PC-9 (cell line): ENCODE measurements at regions of chr6 and their contacts with region 1.

Region 1: GRCh38 chr6:22399701-22400100 is 102.9 kb upstream of the PRL start:
- DNase-seq: no peak
- H3K4me3 ChIP-seq: no peak overlapping the region
- H3K27ac ChIP-seq: no peak overlapping the region
- H3K4me1 ChIP-seq: no peaks in the 10 kb centered on the region
- H3K27me3 ChIP-seq: no peaks in the 10 kb centered on the region
- CTCF ChIP-seq: no peak

Region 2: DNA sequence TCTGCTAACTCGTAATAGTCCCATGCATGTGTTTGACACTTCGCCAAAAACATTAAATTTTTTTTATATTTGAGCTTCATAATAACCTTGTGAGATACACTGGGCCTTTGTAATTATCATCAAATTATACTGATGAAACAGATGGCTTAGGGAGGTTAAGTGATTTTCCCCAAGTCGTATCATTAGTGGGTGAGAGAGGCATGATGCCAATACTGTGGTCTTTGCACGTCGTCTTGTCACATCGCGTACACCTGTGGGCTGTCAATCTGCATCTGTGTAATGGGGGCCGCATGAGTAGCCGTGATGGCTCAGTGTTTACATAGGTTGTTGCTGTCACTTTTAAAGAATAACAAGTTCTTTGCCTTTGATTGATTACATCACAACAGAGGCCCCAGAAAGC is 104.6 kb before region 1 on chr6:
- CTCF ChIA-PET with region 1: no interaction called
- POLR2A ChIA-PET with region 1: no interaction called
- intact Hi-C with region 1: no loop called
- DNase-seq: no peak
- H3K4me3 ChIP-seq: no peak overlapping the region
- H3K27ac ChIP-seq: no peak overlapping the region
- H3K4me1 ChIP-seq: no peaks in the 10 kb centered on the region
- H3K27me3 ChIP-seq: no peaks in the 10 kb centered on the region
- CTCF ChIP-seq: no peak

Region 3: GRCh38 chr6:22413681-22414311 is 14.1 kb after region 1 on chr6:
- CTCF ChIA-PET with region 1: no interaction called
- POLR2A ChIA-PET with region 1: no interaction called
- intact Hi-C with region 1: no loop called
- DNase-seq: no peak
- H3K4me3 ChIP-seq: no peak overlapping the region
- H3K27ac ChIP-seq: no peak overlapping the region
- H3K4me1 ChIP-seq: no peaks in the 10 kb centered on the region
- H3K27me3 ChIP-seq: no peaks in the 10 kb centered on the region
- CTCF ChIP-seq: no peak

Region 4: DNA sequence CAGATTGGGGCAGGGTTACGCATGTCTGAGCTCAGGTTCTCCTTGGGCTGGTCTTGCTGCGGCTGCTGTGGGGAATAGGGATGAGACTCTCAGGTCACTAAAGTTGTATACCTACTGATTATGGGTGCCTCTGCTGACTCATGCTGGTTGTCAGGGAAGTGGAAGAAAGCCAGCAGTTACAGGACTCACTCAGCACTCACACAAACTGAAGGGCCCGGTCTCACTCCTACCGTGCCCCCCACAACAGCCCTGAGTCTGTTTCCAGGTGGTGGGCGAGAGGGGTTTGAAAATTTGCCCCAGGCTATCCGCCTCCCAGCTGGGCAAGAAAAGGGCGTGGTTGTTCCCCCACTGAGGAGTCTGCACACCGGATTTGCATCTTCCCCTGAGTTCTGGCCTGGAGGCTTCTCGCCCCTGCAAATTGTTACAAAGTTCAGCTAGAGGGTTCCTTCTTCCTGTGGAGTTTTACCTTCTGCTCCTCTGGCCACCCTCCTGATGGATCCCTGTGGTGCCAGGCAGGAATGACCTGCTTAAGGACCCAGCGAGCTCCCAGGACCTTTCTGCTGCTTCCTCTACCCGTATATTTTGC is 828.8 kb after region 1 on chr6:
- CTCF ChIA-PET with region 1: no interaction called
- POLR2A ChIA-PET with region 1: interaction called, 12 read pairs
- intact Hi-C with region 1: no loop called
- DNase-seq: peak; percentile 48 to 53
- H3K4me3 ChIP-seq: peak overlapping the region; percentile 53; the same call in 1 of the 2 replicates
- H3K27ac ChIP-seq: peak overlapping the region; percentile 59
- H3K4me1 ChIP-seq: no peaks in the 10 kb centered on the region
- H3K27me3 ChIP-seq: no peaks in the 10 kb centered on the region
- CTCF ChIP-seq: no peak